ENCODE measurements at regions of chr21 and their contacts with region 1.

Region 1: DNA sequence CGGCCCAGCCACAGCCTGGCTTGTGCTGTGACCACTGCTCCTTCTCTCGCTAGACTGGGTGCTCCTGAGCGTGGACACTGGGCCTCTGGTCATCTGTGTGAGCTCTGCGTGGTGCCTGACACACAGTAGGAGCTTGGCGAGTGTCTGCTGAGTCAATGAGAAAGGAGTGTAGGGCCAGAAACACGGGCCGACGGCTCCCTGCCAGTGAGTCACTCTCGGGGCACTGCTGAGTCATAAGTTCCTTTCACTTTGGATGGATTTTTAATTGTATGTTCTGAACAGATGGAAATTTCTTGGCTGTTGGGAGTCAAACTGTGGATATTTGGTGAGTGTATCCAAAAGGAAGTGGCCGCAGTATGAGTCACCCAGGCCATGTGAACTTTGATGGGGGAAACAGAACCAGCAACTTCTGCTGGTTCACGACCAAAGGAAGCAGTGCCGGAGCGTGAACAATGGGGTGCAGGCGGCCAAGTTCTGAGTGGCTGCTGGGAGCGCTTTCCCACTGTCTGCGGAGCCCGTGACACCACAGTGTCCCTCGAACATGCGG is 41.0 kb upstream of the COL18A1 start:
- DNase-seq: peak; percentile 99
- H3K4me3 ChIP-seq: no peak overlapping the region
- H3K27ac ChIP-seq: peak overlapping the region; percentile 96
- H3K4me1 ChIP-seq: peaks cover 42% of the 10 kb centered on the region
- H3K27me3 ChIP-seq: no peaks in the 10 kb centered on the region
- CTCF ChIP-seq: no peak
- POLR2A ChIP-seq: peak; percentile 49

Region 2: DNA sequence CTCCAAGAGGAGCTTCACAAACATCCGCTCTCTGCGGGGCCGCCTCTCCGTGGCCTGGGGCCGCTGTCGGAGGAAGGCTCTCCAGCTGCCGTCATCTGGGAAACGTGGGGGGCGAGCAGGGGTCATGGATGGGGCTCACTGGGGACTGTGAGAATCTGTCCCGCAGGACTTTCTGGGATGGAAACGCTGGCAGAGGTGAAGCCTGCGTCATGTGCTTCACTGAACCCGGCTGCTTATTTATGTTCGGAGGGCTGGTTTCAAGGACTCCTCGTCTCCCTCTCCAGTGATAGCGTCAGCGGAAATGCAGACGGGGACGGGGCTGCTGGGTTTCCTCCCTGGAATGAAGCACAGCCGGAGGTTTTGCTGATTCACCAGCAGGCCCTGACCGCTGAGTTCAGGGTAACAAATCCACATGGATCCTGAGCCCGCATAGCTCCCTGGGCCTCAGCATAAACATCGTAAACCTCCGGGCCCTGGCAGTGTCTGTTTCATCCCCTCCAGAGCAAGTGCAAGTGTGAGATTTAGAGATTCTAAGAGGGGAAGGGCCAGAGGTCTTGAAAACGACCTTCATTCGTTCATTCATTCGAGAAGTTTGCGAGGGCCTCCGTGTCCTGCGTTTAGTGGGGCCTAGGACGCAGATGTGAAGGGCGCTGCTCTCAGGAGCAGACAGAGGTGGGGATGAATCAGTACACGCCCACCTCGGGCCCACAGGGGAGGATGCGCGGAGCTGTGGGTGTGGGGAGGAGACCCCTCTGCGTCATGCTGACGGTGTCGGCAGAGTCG is 69.3 kb before region 1 on chr21:
- CTCF ChIA-PET with region 1: interaction called, 5 read pairs
- POLR2A ChIA-PET with region 1: no interaction called
- dilution Hi-C with region 1: no loop called
- intact Hi-C with region 1: loop called (anchors 1 kb)
- DNase-seq: peak; percentile 98
- H3K4me3 ChIP-seq: no peak overlapping the region
- H3K27ac ChIP-seq: peak overlapping the region; percentile 100
- H3K4me1 ChIP-seq: peaks cover 35% of the 10 kb centered on the region
- H3K27me3 ChIP-seq: no peaks in the 10 kb centered on the region
- CTCF ChIP-seq: no peak
- POLR2A ChIP-seq: peak; percentile 87

Region 3: GRCh38 chr21:45319461-45320211 is 44.4 kb before region 1 on chr21:
- CTCF ChIA-PET with region 1: interaction called, 6 read pairs
- POLR2A ChIA-PET with region 1: interaction called, 3 read pairs
- dilution Hi-C with region 1: no loop called
- intact Hi-C with region 1: loop called (anchors 1 kb)
- DNase-seq: peak; percentile 85
- H3K4me3 ChIP-seq: no peak overlapping the region
- H3K27ac ChIP-seq: peak overlapping the region; percentile 90
- H3K4me1 ChIP-seq: peaks cover 39% of the 10 kb centered on the region
- H3K27me3 ChIP-seq: no peaks in the 10 kb centered on the region
- CTCF ChIP-seq: peak in 1 of 2 donors; percentile 33
- POLR2A ChIP-seq: peak; percentile 47

Region 4: GRCh38 chr21:45386721-45387371 is 22.9 kb after region 1 on chr21:
- CTCF ChIA-PET with region 1: interaction called, 4 read pairs
- POLR2A ChIA-PET with region 1: no interaction called
- dilution Hi-C with region 1: no loop called
- intact Hi-C with region 1: loop called (anchors 2 kb)
- DNase-seq: peak; percentile 57
- H3K4me3 ChIP-seq: no peak overlapping the region
- H3K27ac ChIP-seq: no peak overlapping the region
- H3K4me1 ChIP-seq: no peaks in the 10 kb centered on the region
- H3K27me3 ChIP-seq: peaks cover 0 to 1% of the 10 kb centered on the region in 2 experiments
- CTCF ChIP-seq: peak in 1 of 2 donors; percentile 11
- POLR2A ChIP-seq: no peak

Region 5: DNA sequence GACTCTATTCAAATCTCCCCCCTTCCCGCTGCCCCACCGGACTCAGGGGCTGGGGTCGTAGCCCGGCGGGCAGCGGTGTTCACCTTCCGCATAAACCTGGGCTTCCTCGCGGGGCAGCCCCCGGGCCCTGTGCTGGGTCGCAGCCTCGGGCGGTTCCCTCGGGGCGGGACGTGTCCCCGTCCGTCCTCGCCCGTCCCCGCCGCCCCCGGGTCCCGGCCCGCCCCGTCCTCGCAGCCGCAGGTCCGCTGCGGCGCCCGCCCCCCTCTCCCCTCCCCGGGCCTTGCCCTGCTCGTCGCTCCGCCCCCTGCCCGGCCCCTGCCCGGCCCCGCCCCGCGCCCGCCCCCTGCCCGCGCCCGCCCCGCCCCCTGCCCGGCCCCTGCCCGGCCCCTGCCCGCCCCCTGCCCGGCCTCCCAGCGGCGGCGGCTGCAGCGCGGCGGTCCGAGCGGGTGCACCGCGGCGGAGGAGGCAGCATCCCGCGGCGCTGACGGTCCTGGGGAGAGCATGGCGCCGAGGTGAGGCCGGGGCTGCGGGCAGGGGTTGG is 40.8 kb after region 1 on chr21 and contains the start of gene COL18A1:
- CTCF ChIA-PET with region 1: interaction called, 12 read pairs
- POLR2A ChIA-PET with region 1: no interaction called
- dilution Hi-C with region 1: no loop called
- intact Hi-C with region 1: loop called (anchors 1 kb)
- DNase-seq: peak; percentile 39
- H3K4me3 ChIP-seq: peak within 1 kb of the TSS; percentile 72 to 87 (median 79)
- H3K27ac ChIP-seq: peak within 1 kb of the TSS; percentile 95
- H3K4me1 ChIP-seq: peaks cover 18% of the 10 kb centered on the region
- H3K27me3 ChIP-seq: no peaks in the 10 kb centered on the region
- CTCF ChIP-seq: no peak
- POLR2A ChIP-seq: no peak
- total RNA-seq, gene COL18A1: 252 and 274 TPM in 2 replicates

Region 6: DNA sequence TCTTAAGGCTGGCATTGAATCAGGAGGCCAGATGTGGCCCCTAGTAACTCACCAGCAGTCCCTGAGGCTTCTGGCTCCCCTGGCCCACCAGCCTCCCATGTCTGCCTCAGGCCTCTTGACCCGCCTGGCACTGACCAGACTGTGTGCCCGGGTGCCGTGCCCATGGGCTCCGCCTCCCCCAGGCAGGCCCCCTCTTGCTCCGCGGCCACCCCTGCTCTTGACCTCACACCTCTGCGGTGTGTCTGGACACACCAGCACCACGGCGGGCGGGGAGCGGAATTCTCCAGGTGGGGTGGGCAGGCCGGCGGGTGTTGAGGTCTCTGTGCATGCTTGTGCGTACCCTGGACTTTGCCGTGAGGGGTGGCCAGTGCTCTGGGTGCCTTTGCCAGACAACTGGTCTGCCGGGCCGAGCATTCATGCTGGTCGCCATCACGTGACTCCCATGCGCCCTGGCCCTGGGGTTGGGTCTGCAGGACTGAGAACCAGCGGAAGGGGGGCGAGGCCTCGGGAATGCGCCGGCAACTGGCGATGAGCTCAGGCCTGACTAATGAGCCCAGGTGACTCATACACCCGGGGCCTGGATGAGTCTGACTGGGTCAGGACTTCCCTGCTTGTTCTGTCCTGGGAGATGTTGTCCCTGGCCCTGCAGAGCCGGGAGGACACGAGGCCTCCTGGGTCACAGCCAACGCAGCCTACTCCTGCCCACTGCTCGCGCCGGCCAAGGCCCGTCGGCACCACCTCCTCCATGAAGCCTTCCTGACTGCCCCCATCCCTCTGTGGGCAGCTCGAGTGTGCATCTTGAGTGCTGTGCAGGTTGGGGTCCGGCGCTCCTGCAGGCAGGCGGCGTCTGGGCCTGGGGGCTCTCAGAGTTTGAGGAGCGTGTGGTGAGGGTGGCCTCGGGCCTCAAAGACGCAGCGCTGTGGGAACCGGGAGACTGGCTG is 63.6 kb after region 1 on chr21:
- CTCF ChIA-PET with region 1: no interaction called
- POLR2A ChIA-PET with region 1: no interaction called
- dilution Hi-C with region 1: no loop called
- intact Hi-C with region 1: loop called (anchors 1 kb)
- DNase-seq: peak; percentile 81
- H3K4me3 ChIP-seq: no peak overlapping the region
- H3K27ac ChIP-seq: peak overlapping the region; percentile 69
- H3K4me1 ChIP-seq: peaks cover 20% of the 10 kb centered on the region
- H3K27me3 ChIP-seq: no peaks in the 10 kb centered on the region
- CTCF ChIP-seq: no peak
- POLR2A ChIP-seq: no peak

Region 7: GRCh38 chr21:45439161-45439872 is 75.3 kb after region 1 on chr21:
- CTCF ChIA-PET with region 1: no interaction called
- POLR2A ChIA-PET with region 1: no interaction called
- dilution Hi-C with region 1: no loop called
- intact Hi-C with region 1: loop called (anchors 1 kb)
- DNase-seq: peak; percentile 91
- H3K4me3 ChIP-seq: peak overlapping the region in 2 of 3 experiments; percentile 7 to 26
- H3K27ac ChIP-seq: peak overlapping the region; percentile 82
- H3K4me1 ChIP-seq: peaks cover 15% of the 10 kb centered on the region
- H3K27me3 ChIP-seq: no peaks in the 10 kb centered on the region
- CTCF ChIP-seq: peak; percentile 94 to 96
- POLR2A ChIP-seq: no peak